ENCODE measurements at regions of chr6 and their contacts with region 1.

Region 1: DNA sequence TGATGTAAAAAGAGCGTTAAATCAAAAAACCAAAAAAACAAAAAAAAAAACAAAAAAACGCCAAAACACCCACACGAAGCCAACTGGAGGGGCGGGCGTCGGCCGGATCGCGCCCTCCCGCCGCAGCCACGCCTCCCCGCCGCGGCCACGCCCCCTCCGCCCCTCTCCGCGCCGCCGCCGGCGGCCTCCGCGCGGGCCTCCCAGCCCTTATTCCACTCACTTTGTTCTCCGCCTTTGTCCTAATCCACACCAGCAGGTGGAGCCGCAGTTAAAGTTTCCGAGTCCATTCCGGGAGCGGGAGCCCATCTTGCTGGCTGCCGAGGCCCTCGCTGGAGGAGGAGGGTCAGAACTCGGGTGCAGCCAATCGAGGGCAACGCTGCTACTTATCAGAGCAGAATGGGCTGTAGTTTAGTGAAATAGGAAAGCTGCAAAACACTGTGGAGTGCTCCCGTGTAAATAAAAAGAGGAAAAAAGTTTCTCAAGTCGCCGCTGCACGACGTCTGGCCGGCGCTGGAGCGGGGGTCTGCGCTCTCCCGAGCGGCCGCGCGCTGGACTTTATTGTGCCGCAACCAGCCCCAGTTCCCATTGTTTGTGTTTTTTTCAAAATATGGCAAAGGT is at the start of gene ASF1A:
- DNase-seq: peak; percentile 92
- H3K4me3 ChIP-seq: peak within 1 kb of the TSS; percentile 87 to 97 (median 92)
- H3K27ac ChIP-seq: peak within 1 kb of the TSS; percentile 90
- H3K4me1 ChIP-seq: peaks cover 2 to 8% (median 4%) of the 10 kb centered on the region in 4 experiments; a peak in 5 of 7 replicates
- H3K27me3 ChIP-seq: no peaks in the 10 kb centered on the region
- CTCF ChIP-seq: peak; percentile 51 to 79 (median 73)
- EP300 ChIP-seq: peak in 1 of 2 experiments; percentile 67; a peak in 1 of 3 replicates
- POLR2A ChIP-seq: peak; percentile 53 to 90
- RAD21 ChIP-seq: peak; percentile 39 to 53
- total RNA-seq, gene ASF1A: 45.7 and 50.2 TPM in 2 replicates

Region 2: GRCh38 chr6:118755941-118756646 is 137.8 kb before region 1 on chr6:
- CTCF ChIA-PET with region 1: no interaction called
- POLR2A ChIA-PET with region 1: no interaction called
- DNase-seq: no peak
- H3K4me3 ChIP-seq: no peak overlapping the region
- H3K27ac ChIP-seq: no peak overlapping the region
- H3K4me1 ChIP-seq: no peaks in the 10 kb centered on the region
- H3K27me3 ChIP-seq: no peaks in the 10 kb centered on the region
- CTCF ChIP-seq: no peak
- EP300 ChIP-seq: no peak
- POLR2A ChIP-seq: no peak
- RAD21 ChIP-seq: no peak

Region 3: GRCh38 chr6:118881440-118882313 is 12.2 kb before region 1 on chr6:
- CTCF ChIA-PET with region 1: interaction called, 8 read pairs
- POLR2A ChIA-PET with region 1: interaction called, 19 read pairs
- DNase-seq: no peak
- H3K4me3 ChIP-seq: no peak overlapping the region
- H3K27ac ChIP-seq: no peak overlapping the region
- H3K4me1 ChIP-seq: peaks cover 0 to 6% (median 3%) of the 10 kb centered on the region in 4 experiments; a peak in 4 of 7 replicates
- H3K27me3 ChIP-seq: no peaks in the 10 kb centered on the region
- CTCF ChIP-seq: no peak
- EP300 ChIP-seq: no peak
- POLR2A ChIP-seq: no peak
- RAD21 ChIP-seq: no peak

Region 4: DNA sequence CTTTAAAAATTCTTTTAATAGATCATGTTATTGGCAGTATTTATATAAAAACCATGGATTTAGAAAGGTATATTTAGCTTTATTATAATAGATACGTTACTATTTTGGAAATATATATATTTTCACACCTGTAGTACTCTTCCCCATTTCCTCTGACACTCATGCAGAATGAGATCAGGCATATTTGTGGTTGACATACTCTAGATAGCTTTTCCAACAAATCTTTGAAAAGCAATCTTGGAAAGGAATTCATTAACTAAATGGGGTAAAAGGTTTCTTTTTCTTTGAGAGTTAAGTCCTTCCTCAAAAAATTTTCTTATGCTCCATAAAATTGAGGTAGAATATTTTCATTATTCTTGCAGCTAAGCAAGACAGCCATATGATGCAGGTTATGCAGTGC is 14.5 kb after region 1 on chr6:
- CTCF ChIA-PET with region 1: interaction called, 8 read pairs
- POLR2A ChIA-PET with region 1: interaction called, 11 read pairs
- DNase-seq: no peak
- H3K4me3 ChIP-seq: no peak overlapping the region
- H3K27ac ChIP-seq: no peak overlapping the region
- H3K4me1 ChIP-seq: no peaks in the 10 kb centered on the region
- H3K27me3 ChIP-seq: peaks cover 0 to 1% (median 0%) of the 10 kb centered on the region in 4 experiments; a peak in 1 of 7 replicates
- CTCF ChIP-seq: no peak
- EP300 ChIP-seq: no peak
- POLR2A ChIP-seq: no peak
- RAD21 ChIP-seq: no peak

Region 5: DNA sequence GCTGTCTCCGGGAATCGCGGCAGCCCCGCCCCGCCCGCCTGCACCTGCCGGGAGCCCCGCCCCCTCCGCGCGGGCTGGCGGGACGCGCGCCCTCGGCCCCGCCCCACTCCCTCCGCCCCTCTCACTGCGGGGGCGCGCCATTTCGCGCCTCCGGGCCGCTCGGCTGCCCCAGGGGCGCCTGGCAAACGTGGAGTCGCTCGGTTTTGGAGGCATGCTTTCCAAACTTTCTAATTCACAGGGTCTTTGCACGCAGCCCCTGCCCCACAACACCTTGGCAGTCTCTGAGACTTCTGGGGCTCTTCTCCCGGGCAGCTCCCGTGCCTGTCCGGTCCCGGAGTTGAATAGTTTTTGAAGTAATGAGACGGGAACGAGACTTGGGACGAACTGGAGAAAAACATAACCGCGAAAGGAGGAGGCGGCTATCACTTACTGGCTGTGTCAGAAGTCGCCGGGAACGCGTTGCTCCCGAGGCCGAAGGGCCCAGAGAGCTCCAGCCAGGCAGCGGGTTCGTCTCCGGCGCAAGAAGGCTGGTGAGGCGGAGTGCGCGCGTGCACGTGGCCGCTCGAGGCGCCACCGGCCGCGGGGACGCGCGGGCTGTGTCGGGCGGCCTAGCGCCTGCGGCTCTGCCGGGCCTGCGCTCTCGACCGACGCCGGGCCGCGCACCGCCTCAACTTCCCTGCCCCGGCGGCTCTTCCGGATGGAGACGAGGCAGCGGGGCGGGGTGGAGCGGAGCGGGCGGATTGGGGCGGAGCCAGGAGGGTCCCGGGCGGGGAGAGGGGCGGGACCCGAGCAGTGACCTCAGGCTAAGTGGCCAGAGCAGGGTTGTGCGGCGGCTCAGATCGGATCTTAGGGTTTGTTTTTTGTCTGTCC is 40.8 kb after region 1 on chr6 and contains the start of gene MCM9:
- CTCF ChIA-PET with region 1: interaction called, 3 read pairs
- POLR2A ChIA-PET with region 1: interaction called, 15 read pairs
- DNase-seq: peak; percentile 77 to 90
- H3K4me3 ChIP-seq: peak within 1 kb of the TSS; percentile 73 to 100 (median 86)
- H3K27ac ChIP-seq: peak within 1 kb of the TSS; percentile 82
- H3K4me1 ChIP-seq: peaks cover 0 to 2% (median 0%) of the 10 kb centered on the region in 4 experiments; a peak in 2 of 7 replicates
- H3K27me3 ChIP-seq: no peaks in the 10 kb centered on the region
- CTCF ChIP-seq: no peak
- EP300 ChIP-seq: no peak
- POLR2A ChIP-seq: peak; percentile 42 to 75
- RAD21 ChIP-seq: no peak
- total RNA-seq, gene MCM9: 11.4 and 13.0 TPM in 2 replicates

Region 6: GRCh38 chr6:119002069-119002468 is 108.2 kb after region 1 on chr6:
- CTCF ChIA-PET with region 1: no interaction called
- POLR2A ChIA-PET with region 1: no interaction called
- DNase-seq: no peak
- H3K4me3 ChIP-seq: no peak overlapping the region
- H3K27ac ChIP-seq: no peak overlapping the region
- H3K4me1 ChIP-seq: no peaks in the 10 kb centered on the region
- H3K27me3 ChIP-seq: no peaks in the 10 kb centered on the region
- CTCF ChIP-seq: no peak
- EP300 ChIP-seq: no peak
- POLR2A ChIP-seq: no peak
- RAD21 ChIP-seq: no peak